ENCODE measurements at regions of chr12 and their contacts with region 1.

Region 1: GRCh38 chr12:69900720-69901131 is 75.7 kb downstream of the MYRFL start:
- DNase-seq: peak; percentile 54
- ATAC-seq: no peak
- H3K4me3 ChIP-seq: no peak overlapping the region
- H3K27ac ChIP-seq: no peak overlapping the region
- H3K4me1 ChIP-seq: peaks cover 2% of the 10 kb centered on the region; the same call in 1 of the 2 replicates
- H3K27me3 ChIP-seq: no peaks in the 10 kb centered on the region
- CTCF ChIP-seq: peak; percentile 78
- POLR2A ChIP-seq: no peak
- RAD21 ChIP-seq: peak; percentile 74

Region 2: GRCh38 chr12:69698769-69699540 is 201.8 kb before region 1 on chr12 and contains the start of gene BEST3:
- CTCF ChIA-PET with region 1: no interaction called
- POLR2A ChIA-PET with region 1: no interaction called
- dilution Hi-C with region 1: no loop called
- in situ Hi-C with region 1: no loop called
- intact Hi-C with region 1: no loop called
- DNase-seq: no peak
- ATAC-seq: no peak
- H3K4me3 ChIP-seq: no peak within 1 kb of the TSS
- H3K27ac ChIP-seq: no peak within 1 kb of the TSS
- H3K4me1 ChIP-seq: no peaks in the 10 kb centered on the region
- H3K27me3 ChIP-seq: no peaks in the 10 kb centered on the region
- CTCF ChIP-seq: no peak
- POLR2A ChIP-seq: no peak
- RAD21 ChIP-seq: no peak
- total RNA-seq, gene BEST3: under 0.01 TPM in 2 replicates

Region 3: GRCh38 chr12:69985656-69986055 is 84.9 kb after region 1 on chr12:
- CTCF ChIA-PET with region 1: interaction called, 3 read pairs
- POLR2A ChIA-PET with region 1: no interaction called
- dilution Hi-C with region 1: no loop called
- in situ Hi-C with region 1: no loop called
- intact Hi-C with region 1: loop called (anchors 5 kb)
- DNase-seq: no peak
- ATAC-seq: no peak
- H3K4me3 ChIP-seq: no peak overlapping the region
- H3K27ac ChIP-seq: no peak overlapping the region
- H3K4me1 ChIP-seq: peaks cover 9% of the 10 kb centered on the region
- H3K27me3 ChIP-seq: no peaks in the 10 kb centered on the region
- CTCF ChIP-seq: no peak
- POLR2A ChIP-seq: no peak
- RAD21 ChIP-seq: no peak

Region 4: GRCh38 chr12:70236990-70237389 is 336.3 kb after region 1 on chr12:
- CTCF ChIA-PET with region 1: no interaction called
- POLR2A ChIA-PET with region 1: no interaction called
- dilution Hi-C with region 1: no loop called
- in situ Hi-C with region 1: loop called (anchors 10 kb)
- intact Hi-C with region 1: no loop called
- DNase-seq: no peak
- ATAC-seq: no peak
- H3K4me3 ChIP-seq: no peak overlapping the region
- H3K27ac ChIP-seq: no peak overlapping the region
- H3K4me1 ChIP-seq: no peaks in the 10 kb centered on the region
- H3K27me3 ChIP-seq: no peaks in the 10 kb centered on the region
- CTCF ChIP-seq: no peak
- POLR2A ChIP-seq: no peak
- RAD21 ChIP-seq: no peak

Region 5: DNA sequence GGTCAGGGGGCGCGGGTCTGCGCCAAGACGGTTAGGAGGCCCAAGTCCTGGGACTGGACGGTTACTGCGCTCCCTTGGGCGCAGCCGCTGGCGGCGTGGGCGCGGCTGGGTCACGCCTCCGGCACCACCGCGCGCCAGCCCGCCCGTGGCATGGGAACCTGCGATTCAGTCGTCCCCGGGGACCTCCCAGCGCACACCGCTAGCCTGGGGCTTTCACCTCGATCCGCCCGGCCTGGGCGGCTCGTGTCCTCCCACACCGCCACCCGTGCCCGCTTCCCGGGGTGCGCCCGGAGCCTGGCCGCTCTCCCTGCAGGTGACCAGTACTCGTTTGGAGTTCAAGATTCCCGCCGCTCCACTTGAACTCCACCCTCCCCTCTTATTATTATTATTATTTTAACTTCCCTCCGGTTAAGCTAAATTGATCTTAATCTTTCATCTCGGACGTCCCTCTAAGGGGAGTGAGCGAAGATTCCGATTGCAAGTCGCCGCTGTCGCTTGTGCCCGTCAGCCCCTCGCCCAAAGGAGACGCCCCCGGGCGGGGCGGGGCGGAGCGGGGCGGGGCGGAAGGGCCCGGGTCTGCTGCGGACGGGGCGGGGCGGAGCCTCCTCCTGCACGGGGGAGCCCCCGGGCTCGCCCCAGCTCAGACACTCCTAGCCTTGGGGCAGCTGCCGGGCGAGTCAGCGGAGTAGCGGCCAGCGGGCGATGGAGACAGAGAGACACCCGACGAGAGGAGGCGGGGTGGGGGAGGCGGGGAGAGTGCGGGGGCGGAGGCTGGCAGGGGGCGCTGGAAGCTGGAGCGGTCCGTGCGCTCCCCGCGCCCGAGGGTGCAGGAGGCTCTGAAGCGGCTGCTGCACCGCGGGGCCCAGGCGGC is 465.2 kb after region 1 on chr12 and contains the start of gene KCNMB4:
- CTCF ChIA-PET with region 1: no interaction called
- POLR2A ChIA-PET with region 1: no interaction called
- dilution Hi-C with region 1: no loop called
- in situ Hi-C with region 1: no loop called
- intact Hi-C with region 1: loop called (anchors 5 kb)
- DNase-seq: peak; percentile 10
- ATAC-seq: peak; percentile 92
- H3K4me3 ChIP-seq: peak within 1 kb of the TSS; percentile 85
- H3K27ac ChIP-seq: no peak within 1 kb of the TSS
- H3K4me1 ChIP-seq: peaks cover 3% of the 10 kb centered on the region; the same call in 1 of the 2 replicates
- H3K27me3 ChIP-seq: peaks cover 15% of the 10 kb centered on the region; the same call in 1 of the 2 replicates
- CTCF ChIP-seq: no peak
- POLR2A ChIP-seq: no peak
- RAD21 ChIP-seq: no peak
- total RNA-seq, gene KCNMB4: 0.90 and 1.4 TPM in 2 replicates